ENCODE measurements at regions of chr7 and their contacts with region 1.

Region 1: DNA sequence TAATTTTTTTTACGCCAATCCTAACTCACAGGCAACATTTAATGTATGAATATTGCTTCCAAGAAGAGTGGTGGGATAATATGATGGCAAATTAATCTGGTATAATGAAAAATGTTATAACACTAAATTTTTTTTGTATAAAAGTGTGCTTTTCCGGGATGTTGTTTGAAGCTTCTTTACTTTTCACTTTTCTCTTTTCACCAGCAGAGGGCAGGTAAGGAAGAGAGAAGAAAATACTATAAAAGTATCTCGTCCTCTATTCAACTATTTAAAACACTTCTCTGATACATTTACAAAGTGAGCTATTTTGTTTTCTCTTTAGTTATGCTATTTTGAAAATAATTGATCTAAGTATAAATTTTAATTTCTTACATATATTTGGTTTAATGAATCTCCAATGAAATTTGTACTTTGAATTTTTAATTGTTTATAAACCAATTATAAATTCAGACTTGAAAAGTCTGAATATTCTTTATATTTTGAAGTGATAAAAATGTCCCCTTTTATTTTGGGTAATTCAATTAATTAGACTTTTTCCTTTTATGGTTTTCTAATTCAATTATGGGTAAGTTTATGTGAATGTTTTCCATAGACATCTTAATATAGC is 20.7 kb upstream of the CFTR start:
- DNase-seq: no peak
- ATAC-seq: peak; percentile 61
- H3K4me3 ChIP-seq: no peak overlapping the region
- H3K27ac ChIP-seq: no peak overlapping the region
- H3K4me1 ChIP-seq: no peaks in the 10 kb centered on the region
- H3K27me3 ChIP-seq: no peaks in the 10 kb centered on the region
- CTCF ChIP-seq: peak; percentile 38 to 56 (median 51); a peak in 5 of 6 replicates
- EP300 ChIP-seq: no peak
- POLR2A ChIP-seq: no peak
- RAD21 ChIP-seq: peak; percentile 71

Region 2: GRCh38 chr7:117472335-117472734 is 13.3 kb after region 1 on chr7:
- CTCF ChIA-PET with region 1: interaction called, 13 read pairs
- POLR2A ChIA-PET with region 1: interaction called, 3 read pairs
- RAD21 ChIA-PET with region 1: interaction called, 4 read pairs
- SMC1A ChIA-PET with region 1: interaction called, 16 read pairs
- in situ Hi-C with region 1: no loop called
- intact Hi-C with region 1: no loop called
- DNase-seq: no peak
- ATAC-seq: peak; percentile 51
- H3K4me3 ChIP-seq: no peak overlapping the region
- H3K27ac ChIP-seq: no peak overlapping the region
- H3K4me1 ChIP-seq: peaks cover 4% of the 10 kb centered on the region
- H3K27me3 ChIP-seq: no peaks in the 10 kb centered on the region
- CTCF ChIP-seq: no peak
- EP300 ChIP-seq: no peak
- POLR2A ChIP-seq: no peak
- RAD21 ChIP-seq: no peak

Region 3: DNA sequence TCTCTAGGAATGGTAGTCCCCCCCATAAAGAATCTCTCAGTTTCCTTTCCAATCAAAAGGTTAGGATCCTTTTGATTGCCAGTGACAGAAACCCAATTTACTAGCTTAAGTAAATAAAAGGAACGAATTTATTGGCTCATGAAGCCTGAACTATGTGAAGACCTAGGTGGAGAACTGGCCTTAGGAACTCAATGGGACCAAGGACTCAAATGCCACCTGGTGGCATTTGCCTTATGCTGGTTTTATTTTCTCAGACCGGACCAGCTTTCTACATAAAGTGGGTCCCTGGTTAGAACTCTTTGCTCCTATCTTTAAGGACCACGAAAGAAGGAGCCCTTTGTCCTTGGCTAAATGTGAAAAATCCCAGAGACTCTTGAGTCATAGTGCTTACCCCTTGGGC is 46.2 kb after region 1 on chr7:
- CTCF ChIA-PET with region 1: interaction called, 20 read pairs
- POLR2A ChIA-PET with region 1: no interaction called
- RAD21 ChIA-PET with region 1: interaction called, 9 read pairs
- SMC1A ChIA-PET with region 1: interaction called, 8 read pairs
- in situ Hi-C with region 1: no loop called
- intact Hi-C with region 1: no loop called
- DNase-seq: no peak
- ATAC-seq: peak; percentile 55
- H3K4me3 ChIP-seq: no peak overlapping the region
- H3K27ac ChIP-seq: no peak overlapping the region
- H3K4me1 ChIP-seq: no peaks in the 10 kb centered on the region
- H3K27me3 ChIP-seq: no peaks in the 10 kb centered on the region
- CTCF ChIP-seq: peak in 2 of 3 experiments; percentile 12 to 13; a peak in 2 of 6 replicates
- EP300 ChIP-seq: no peak
- POLR2A ChIP-seq: no peak
- RAD21 ChIP-seq: peak; percentile 22; the same call in 1 of the 2 replicates

Region 4: DNA sequence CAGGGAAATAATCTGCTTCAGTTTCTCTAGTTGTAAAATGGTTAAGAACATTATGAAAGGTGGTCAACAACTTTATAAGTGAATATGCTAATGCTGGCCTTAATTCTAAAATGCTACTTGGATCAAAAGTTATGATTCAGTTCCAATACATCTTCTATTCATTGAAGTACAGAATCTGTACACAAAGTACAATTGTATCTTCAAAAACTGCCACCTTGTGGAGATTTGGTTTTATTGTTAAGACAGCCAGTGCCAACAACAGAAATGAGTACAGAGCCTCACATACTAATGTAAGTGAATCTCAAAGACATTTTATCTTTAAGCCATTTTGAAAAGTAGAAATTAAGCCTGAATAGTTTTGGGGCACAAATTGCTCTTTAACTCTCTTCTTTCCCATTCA is 214.8 kb after region 1 on chr7:
- CTCF ChIA-PET with region 1: interaction called, 88 read pairs
- POLR2A ChIA-PET with region 1: no interaction called
- RAD21 ChIA-PET with region 1: interaction called, 22 read pairs
- SMC1A ChIA-PET with region 1: interaction called, 38 read pairs
- in situ Hi-C with region 1: no loop called
- intact Hi-C with region 1: loop called (anchors 1 kb)
- DNase-seq: no peak
- ATAC-seq: peak; percentile 93
- H3K4me3 ChIP-seq: no peak overlapping the region
- H3K27ac ChIP-seq: no peak overlapping the region
- H3K4me1 ChIP-seq: no peaks in the 10 kb centered on the region
- H3K27me3 ChIP-seq: no peaks in the 10 kb centered on the region; a peak in 1 of 4 replicates
- CTCF ChIP-seq: peak; percentile 11 to 51 (median 29); a peak in 4 of 6 replicates
- EP300 ChIP-seq: no peak
- POLR2A ChIP-seq: no peak
- RAD21 ChIP-seq: peak; percentile 53; the same call in 1 of the 2 replicates

Region 5: GRCh38 chr7:117975476-117975875 is 516.4 kb after region 1 on chr7:
- CTCF ChIA-PET with region 1: no interaction called
- POLR2A ChIA-PET with region 1: no interaction called
- RAD21 ChIA-PET with region 1: no interaction called
- SMC1A ChIA-PET with region 1: no interaction called
- in situ Hi-C with region 1: no loop called
- intact Hi-C with region 1: no loop called
- DNase-seq: no peak
- ATAC-seq: no peak
- H3K4me3 ChIP-seq: no peak overlapping the region
- H3K27ac ChIP-seq: no peak overlapping the region
- H3K4me1 ChIP-seq: no peaks in the 10 kb centered on the region
- H3K27me3 ChIP-seq: no peaks in the 10 kb centered on the region
- CTCF ChIP-seq: no peak
- EP300 ChIP-seq: no peak
- POLR2A ChIP-seq: no peak
- RAD21 ChIP-seq: no peak

Region 6: DNA sequence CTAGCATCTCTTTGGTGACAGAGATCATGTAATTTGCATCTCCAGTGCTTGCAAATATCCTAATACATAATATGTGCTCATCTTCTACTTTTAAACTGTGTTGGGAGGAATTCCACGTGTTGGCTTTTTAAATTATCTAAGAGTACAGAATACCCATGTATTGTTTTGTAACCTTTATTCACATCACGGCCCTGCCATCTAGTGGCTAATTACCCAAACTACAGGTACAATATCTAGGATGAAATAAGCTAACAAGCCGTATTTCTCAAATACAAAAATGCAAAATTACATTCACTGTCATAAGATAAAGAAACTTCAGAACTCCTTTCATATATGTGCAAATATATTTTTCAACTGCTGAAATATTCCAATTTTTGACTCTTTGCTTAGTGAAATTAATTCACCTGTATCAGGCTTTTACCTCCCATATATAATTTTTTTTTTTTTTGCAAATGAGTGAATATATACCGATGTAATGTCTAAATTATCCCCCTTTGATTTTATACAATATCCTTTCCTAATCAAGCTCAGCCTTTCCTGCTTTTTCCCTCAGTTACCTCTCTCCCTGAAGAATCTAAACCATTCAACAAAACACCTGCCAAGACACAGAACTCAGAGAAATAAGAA is 694.6 kb after region 1 on chr7:
- CTCF ChIA-PET with region 1: interaction called, 6 read pairs
- POLR2A ChIA-PET with region 1: no interaction called
- RAD21 ChIA-PET with region 1: no interaction called
- SMC1A ChIA-PET with region 1: interaction called, 8 read pairs
- in situ Hi-C with region 1: no loop called
- intact Hi-C with region 1: loop called (anchors 2 kb)
- DNase-seq: no peak
- ATAC-seq: peak; percentile 66
- H3K4me3 ChIP-seq: no peak overlapping the region
- H3K27ac ChIP-seq: no peak overlapping the region
- H3K4me1 ChIP-seq: no peaks in the 10 kb centered on the region
- H3K27me3 ChIP-seq: no peaks in the 10 kb centered on the region
- CTCF ChIP-seq: peak; percentile 55 to 68 (median 61); a peak in 5 of 6 replicates
- EP300 ChIP-seq: no peak
- POLR2A ChIP-seq: no peak
- RAD21 ChIP-seq: peak; percentile 72

Measured in GM12878 (cell line).